CD14-positive monocyte (primary cell): ENCODE measurements at regions of chr16 and their contacts with region 1.

Region 1: GRCh38 chr16:89115216-89115861 is 21.7 kb downstream of the ACSF3 start:
- DNase-seq: peak; percentile 93 to 98 (median 96)
- H3K4me3 ChIP-seq: peak overlapping the region; percentile 25 to 72 (median 30)
- H3K4me3 Mint-ChIP-seq: peak overlapping the region; percentile 81 to 89
- H3K27ac ChIP-seq: peak overlapping the region; percentile 65 to 88
- H3K27ac Mint-ChIP-seq: peak overlapping the region; percentile 92 to 99 (median 96)
- H3K4me1 ChIP-seq: peaks cover 42 to 52% of the 10 kb centered on the region in 2 donors
- H3K4me1 Mint-ChIP-seq: peaks cover 45% of the 10 kb centered on the region
- H3K27me3 ChIP-seq: no peaks in the 10 kb centered on the region
- H3K27me3 Mint-ChIP-seq: peaks cover 0 to 2% (median 0%) of the 10 kb centered on the region in 3 donors
- CTCF ChIP-seq: no peak

Region 2: GRCh38 chr16:88963583-88963982 is 151.8 kb before region 1 on chr16:
- intact Hi-C with region 1: loop called in 1 of 2 experiments (anchors 5 kb)
- DNase-seq: no peak
- H3K4me3 ChIP-seq: no peak overlapping the region
- H3K4me3 Mint-ChIP-seq: no peak overlapping the region
- H3K27ac ChIP-seq: no peak overlapping the region
- H3K27ac Mint-ChIP-seq: peak overlapping the region in 1 of 7 donors; percentile 33
- H3K4me1 ChIP-seq: peaks cover 25 to 38% of the 10 kb centered on the region in 2 donors
- H3K4me1 Mint-ChIP-seq: peaks cover 36% of the 10 kb centered on the region
- H3K27me3 ChIP-seq: peaks cover 0 to 2% of the 10 kb centered on the region in 2 donors
- H3K27me3 Mint-ChIP-seq: peaks cover 8 to 39% (median 22%) of the 10 kb centered on the region in 3 donors
- CTCF ChIP-seq: no peak